ENCODE measurements at regions of chr11 and their contacts with region 1.

Region 1: GRCh38 chr11:67401495-67402191 is at the start of gene PPP1CA:
- DNase-seq: peak; percentile 95
- H3K27ac ChIP-seq: peak within 1 kb of the TSS; percentile 94
- CTCF ChIP-seq: peak; percentile 85

Region 2: DNA sequence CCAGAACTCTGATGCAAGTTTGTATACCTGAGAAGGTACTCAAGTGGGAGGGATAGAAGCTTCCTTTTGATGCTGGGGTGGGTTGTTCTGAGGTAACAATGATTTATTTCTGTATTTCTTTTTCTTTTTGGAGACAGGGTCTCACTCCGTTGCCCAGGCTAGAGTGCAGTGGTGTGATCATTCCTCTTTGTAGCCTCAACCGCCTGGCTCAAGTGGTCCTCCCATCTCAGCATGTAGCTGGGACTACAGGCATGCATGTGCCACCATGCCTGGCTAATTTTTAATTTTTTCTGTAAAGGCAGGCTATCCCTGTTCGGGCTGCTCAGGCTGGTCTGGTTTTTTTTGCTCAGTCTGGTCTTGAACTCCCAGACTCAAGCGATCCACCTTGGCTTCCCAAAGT is 274.7 kb before region 1 on chr11:
- CTCF ChIA-PET with region 1: no interaction called
- POLR2A ChIA-PET with region 1: no interaction called
- DNase-seq: no peak
- H3K27ac ChIP-seq: peak overlapping the region; percentile 37; the same call in 1 of the 2 replicates
- CTCF ChIP-seq: no peak

Region 3: DNA sequence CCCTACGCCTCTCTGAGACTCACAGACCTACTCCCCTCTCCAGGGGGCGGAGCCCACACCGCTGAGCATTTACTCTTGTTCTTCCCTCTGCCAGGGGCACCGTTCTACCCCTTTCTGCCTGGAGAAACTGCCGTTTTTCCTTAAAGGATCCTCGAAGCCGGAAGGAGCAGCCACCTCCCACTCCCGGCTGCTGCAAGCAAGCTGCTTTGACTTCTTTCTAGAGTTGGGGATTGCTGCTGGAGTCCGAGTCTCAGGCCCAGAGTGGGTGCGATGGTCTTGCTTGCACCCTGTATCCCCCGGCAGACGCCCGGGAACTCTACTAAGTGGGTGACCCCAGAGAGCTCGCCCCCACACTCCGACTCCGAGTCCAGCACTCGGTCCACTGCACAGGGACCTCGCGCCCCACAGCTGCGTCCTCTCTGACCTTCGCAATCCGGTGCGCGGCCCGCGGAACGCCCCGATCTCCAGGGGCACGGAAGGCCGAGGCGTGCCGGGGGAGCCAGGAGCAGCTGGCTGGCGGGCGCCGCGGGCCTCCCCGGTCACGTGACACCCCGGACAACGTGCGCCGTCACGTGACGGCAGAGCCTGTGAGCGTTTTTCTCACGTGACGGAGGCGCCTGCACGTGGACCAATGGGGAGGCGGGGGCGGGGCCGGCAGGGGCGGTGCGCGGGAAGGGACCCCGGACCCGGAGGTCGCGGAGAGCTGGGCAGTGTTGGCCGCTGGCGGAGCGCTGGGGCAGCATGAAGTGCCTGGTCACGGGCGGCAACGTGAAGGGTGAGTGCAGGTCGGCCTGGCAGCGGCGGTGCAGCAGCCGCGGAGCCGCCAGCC is 10.1 kb before region 1 on chr11 and contains the start of gene RAD9A:
- CTCF ChIA-PET with region 1: interaction called, 9 read pairs
- POLR2A ChIA-PET with region 1: interaction called, 14 read pairs
- DNase-seq: peak; percentile 97
- H3K27ac ChIP-seq: peak within 1 kb of the TSS; percentile 94
- CTCF ChIP-seq: no peak

Region 4: GRCh38 chr11:67428052-67428914 is 26.6 kb after region 1 on chr11 and contains the start of gene RPS6KB2:
- CTCF ChIA-PET with region 1: interaction called, 12 read pairs
- POLR2A ChIA-PET with region 1: interaction called, 7 read pairs
- DNase-seq: peak; percentile 99
- H3K27ac ChIP-seq: peak within 1 kb of the TSS; percentile 84
- CTCF ChIP-seq: no peak

Region 5: DNA sequence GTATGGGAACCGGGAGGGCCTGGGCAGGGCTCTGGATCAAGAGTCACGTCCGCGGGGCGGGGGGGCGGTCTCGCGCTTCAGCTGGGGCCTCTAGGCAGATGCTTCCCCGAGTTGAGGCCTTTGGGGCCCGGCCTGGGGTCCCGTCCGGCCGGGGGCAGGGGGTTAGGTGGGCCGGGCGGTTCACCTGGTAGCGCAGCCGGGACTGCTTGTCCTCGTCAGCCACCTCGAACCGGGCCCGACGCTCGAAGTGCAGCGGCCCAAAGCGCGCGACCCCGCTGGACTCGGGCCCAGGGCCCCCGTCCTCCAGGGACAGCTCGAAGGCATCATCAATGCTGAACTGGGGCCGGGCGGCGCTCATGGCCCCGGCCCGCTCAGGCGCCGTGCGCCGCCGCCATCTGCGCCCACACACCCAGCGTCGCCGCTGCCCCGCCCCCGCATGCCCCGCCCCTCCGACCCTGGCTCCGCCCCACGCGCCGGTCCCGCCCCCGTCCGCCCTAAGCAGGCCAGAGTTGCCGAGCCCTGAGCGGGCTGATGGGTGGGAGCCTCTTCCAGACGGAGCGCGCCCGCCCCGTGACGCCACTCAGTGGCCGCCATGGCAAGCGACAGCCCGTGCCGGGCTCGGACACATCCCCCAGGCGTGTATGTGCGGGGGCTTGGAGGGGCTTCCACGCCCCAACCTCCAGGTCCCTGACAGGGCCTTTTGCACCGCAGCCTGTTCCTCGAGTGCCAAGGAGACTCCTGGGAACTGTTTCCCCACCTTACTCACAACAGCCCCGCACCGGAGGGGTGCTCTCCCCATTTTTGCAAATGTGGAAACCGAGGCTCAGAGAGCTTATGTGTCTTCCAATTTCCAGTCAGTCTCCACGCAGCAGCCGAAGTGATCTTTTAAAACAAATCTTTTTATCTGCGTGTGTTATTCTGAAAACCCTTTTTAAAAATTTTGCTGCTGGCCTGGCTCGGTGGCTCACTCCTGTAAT is 67.5 kb after region 1 on chr11 and contains the start of gene TMEM134:
- CTCF ChIA-PET with region 1: interaction called, 13 read pairs
- POLR2A ChIA-PET with region 1: interaction called, 11 read pairs
- DNase-seq: peak; percentile 89
- H3K27ac ChIP-seq: peak within 1 kb of the TSS; percentile 96
- CTCF ChIP-seq: peak; percentile 57

Measured in RWPE1 (cell line).